ENCODE measurements at regions of chr12 and their contacts with region 1.

Region 1: DNA sequence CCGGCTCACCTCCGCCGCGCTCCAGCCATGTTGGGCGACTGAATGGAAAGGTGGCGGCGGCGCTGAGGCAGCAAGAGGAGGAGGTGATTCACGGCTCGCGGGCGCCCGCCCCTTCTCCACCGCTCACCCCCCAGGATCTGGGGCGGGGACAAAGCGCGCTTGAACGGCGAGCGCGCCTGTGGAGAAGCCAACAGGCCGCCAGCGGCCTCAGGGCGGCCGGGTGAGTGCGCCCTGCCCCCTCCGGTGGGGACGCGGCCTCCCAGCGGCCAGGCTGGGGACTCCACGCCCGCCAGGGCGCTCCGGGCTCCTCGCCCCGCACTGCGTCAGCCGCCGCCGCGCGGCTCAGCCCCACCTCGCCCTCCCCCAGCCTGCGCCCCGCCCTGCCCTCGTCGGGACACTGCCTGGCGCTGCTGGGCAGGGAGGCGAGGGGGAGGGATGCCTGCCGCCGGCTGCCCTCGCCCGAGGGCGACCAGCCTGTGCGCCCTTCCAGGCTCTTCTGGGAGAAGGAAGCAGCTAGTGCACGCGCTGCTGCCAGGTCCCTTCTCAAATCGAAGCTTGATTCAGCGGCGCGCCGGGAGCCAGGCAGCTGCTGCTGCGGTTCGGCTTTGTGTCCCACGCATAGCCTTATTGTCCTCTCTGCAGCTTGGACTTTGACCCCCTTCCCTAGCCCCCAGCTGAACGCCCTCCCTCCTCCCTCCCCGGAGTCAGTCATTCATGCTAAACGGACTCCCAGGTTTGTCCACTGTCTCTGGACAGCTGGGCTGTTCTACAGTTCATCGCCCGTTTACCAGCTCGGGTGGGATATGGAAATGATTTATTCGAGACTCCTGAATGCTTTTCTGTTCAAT is at the start of gene KIF21A:
- DNase-seq: peak; percentile 96
- H3K4me3 Mint-ChIP-seq: peak within 1 kb of the TSS; percentile 95
- H3K27ac Mint-ChIP-seq: peak within 1 kb of the TSS; percentile 97
- H3K4me1 Mint-ChIP-seq: peaks cover 17% of the 10 kb centered on the region
- H3K27me3 Mint-ChIP-seq: peaks cover 14% of the 10 kb centered on the region
- total RNA-seq, gene KIF21A: 28.1 and 29.5 TPM in 2 replicates

Region 2: GRCh38 chr12:38316391-38317129 is 1126.7 kb before region 1 on chr12 and contains the start of gene ALG10B:
- intact Hi-C with region 1: loop called (anchors 5 kb)
- DNase-seq: peak; percentile 98
- H3K4me3 Mint-ChIP-seq: peak within 1 kb of the TSS; percentile 98
- H3K27ac Mint-ChIP-seq: peak within 1 kb of the TSS; percentile 96
- H3K4me1 Mint-ChIP-seq: peaks cover 13% of the 10 kb centered on the region
- H3K27me3 Mint-ChIP-seq: no peaks in the 10 kb centered on the region
- total RNA-seq, gene ALG10B: 15.1 and 16.0 TPM in 2 replicates

Region 3: DNA sequence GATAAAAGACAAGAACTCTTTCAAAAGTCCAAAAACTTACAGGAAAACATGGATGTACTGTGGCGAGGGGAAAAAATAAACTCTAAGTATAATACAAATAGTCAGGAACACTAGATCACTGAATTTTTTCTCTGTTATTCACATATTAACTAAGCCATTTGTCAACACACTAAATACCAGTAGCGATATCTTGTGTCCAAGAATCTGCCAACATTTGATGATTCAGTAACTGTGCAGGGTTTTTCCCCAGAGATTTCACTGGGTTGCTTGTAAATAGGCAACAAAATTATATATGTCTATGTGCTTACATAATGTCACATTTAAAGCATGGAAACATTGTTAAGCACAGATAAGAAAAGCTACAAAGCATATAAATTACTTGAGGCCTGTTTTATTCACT is 206.3 kb before region 1 on chr12:
- intact Hi-C with region 1: no loop called
- DNase-seq: no peak
- H3K4me3 Mint-ChIP-seq: no peak overlapping the region
- H3K27ac Mint-ChIP-seq: no peak overlapping the region
- H3K4me1 Mint-ChIP-seq: no peaks in the 10 kb centered on the region
- H3K27me3 Mint-ChIP-seq: no peaks in the 10 kb centered on the region

Region 4: GRCh38 chr12:39319187-39319586 is 124.1 kb before region 1 on chr12:
- intact Hi-C with region 1: loop called (anchors 5 kb)
- DNase-seq: no peak
- H3K4me3 Mint-ChIP-seq: no peak overlapping the region
- H3K27ac Mint-ChIP-seq: no peak overlapping the region
- H3K4me1 Mint-ChIP-seq: no peaks in the 10 kb centered on the region
- H3K27me3 Mint-ChIP-seq: no peaks in the 10 kb centered on the region

Region 5: GRCh38 chr12:39406262-39406661 is 37.0 kb before region 1 on chr12:
- intact Hi-C with region 1: loop called (anchors 5 kb)
- DNase-seq: no peak
- H3K4me3 Mint-ChIP-seq: no peak overlapping the region
- H3K27ac Mint-ChIP-seq: no peak overlapping the region
- H3K4me1 Mint-ChIP-seq: peaks cover 11% of the 10 kb centered on the region
- H3K27me3 Mint-ChIP-seq: no peaks in the 10 kb centered on the region

Region 6: DNA sequence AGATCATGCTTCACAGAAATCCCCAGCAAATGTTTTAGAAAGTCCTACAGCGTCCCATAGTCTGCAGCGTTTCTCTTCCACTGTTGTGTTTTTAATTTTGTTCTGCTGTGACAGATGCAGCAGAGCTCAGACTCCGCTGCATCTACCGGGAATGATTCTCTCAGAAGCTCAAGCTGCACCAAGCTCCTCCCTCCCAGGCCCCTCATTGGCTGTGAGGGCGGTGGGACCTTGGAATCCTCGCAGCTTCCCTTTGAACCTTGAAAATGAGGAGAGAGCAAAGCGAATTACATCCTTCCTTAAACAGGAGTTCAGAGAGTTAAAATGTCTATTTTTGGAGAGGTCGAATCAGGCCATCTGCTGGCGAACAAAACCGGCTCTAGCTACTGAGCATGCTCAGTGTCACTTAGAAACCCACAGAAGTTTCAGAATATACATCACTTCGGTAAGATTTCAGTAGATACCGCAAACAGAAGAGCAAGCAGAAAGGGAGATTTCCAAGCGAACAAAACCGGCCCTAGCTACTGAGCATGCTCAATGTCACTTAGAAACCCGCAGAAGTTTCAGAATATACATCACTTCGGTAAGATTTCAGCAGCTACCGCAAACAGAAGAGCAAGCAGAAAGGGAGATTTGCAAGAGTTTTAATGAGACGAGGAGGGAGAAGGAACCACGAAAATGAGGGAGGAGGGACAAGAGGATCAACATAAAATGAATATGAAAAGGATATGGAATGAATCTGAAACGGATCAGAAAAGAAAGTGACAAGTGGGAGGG is 176.5 kb after region 1 on chr12 and contains the start of gene ABCD2:
- intact Hi-C with region 1: loop called (anchors 1 kb)
- DNase-seq: peak; percentile 93
- H3K4me3 Mint-ChIP-seq: no peak within 1 kb of the TSS
- H3K27ac Mint-ChIP-seq: no peak within 1 kb of the TSS
- H3K4me1 Mint-ChIP-seq: peaks cover 30% of the 10 kb centered on the region
- H3K27me3 Mint-ChIP-seq: no peaks in the 10 kb centered on the region
- total RNA-seq, gene ABCD2: 7.0 and 7.4 TPM in 2 replicates

Region 7: DNA sequence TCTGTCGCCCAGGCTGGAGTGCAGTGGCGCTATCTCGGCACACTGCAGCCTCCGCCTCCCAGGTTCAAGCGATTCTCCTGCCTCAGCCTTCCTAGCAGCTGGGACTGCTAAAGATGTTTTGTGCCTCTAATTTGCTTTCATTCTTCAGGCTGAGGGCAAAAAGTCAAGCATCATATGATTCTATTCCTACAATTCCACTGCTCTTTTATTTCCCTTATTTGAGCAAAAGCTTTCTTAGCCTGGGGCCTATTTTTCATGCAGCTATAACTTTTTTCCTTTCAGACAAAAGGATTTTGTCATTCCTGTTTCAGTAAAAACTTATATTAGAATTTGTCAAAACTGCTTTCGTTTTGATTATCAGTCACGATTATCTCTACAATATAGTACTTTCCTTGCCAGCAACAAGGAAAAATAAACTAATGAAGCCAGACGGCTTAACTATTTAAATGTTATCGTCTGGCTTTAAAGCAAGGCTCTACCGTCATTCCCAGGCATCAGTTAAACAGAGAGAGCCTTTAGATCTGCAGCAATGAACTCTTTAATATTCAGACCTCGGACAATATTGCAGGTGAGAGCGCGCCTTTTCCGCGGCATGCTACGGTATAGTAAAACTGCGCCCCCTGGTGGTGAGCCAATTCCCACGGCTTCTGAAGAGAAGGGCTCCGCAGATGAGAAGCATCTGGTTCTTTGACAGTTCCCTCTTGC is 663.9 kb after region 1 on chr12:
- intact Hi-C with region 1: loop called (anchors 5 kb)
- DNase-seq: peak; percentile 95
- H3K4me3 Mint-ChIP-seq: peak overlapping the region; percentile 63
- H3K27ac Mint-ChIP-seq: no peak overlapping the region
- H3K4me1 Mint-ChIP-seq: peaks cover 31% of the 10 kb centered on the region
- H3K27me3 Mint-ChIP-seq: peaks cover 30% of the 10 kb centered on the region

Measured in activated CD4-positive, alpha-beta T cell treated with anti-CD3 and anti-CD28 coated beads, Interleukin-2, amount 10 ng/mL, durations not matched to agents 24 days and 14 days (primary cell).